ENCODE measurements at regions of chr1 and their contacts with region 1.

Region 1: DNA sequence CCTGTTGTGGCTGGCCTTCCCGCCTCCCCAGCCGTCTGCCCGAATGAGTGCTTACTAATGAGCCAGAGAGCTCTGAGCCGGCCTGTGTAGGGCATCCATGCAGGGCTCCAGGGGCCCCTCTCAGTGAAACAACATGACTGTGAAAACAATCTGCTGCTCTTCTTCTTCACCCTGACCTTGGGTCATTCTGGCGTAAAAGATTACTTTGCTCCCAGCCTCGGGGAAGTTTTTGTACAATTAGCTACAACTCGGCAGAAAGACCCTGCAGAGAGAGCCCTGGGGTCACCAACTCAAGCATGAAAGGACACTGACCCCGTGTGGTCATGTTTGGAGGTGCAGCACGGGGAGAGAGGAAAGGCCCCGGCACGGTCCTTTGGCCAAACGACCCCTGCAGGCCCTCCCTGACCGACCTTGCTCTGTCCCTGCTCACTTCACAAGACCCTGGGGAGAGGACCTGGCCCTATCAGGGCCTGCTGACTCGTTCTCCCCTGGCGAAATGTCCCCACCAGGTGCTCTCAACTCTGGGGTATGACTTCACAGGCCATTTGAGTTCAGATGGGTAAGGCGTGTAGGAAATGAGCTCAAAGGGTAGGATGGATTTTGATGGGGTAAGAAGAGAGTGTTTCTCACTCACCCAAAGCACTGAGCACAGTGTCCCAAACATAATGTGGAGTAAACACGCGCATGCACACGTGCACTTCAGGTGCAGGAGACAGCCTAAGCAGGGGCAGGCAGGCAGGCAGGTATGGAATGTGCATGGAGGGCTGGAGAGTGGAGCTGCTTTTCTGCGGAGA is 22.9 kb upstream of the FAM20B start:
- DNase-seq: peak; percentile 55
- CTCF ChIP-seq: peak; percentile 91

Region 2: GRCh38 chr1:178529364-178530036 is 473.2 kb before region 1 on chr1:
- in situ Hi-C with region 1: loop called (anchors 5 kb)
- DNase-seq: no peak
- CTCF ChIP-seq: no peak

Region 3: GRCh38 chr1:178768423-178768822 is 234.3 kb before region 1 on chr1:
- in situ Hi-C with region 1: loop called (anchors 25 kb)
- DNase-seq: peak; percentile 46
- CTCF ChIP-seq: peak; percentile 83

Region 4: DNA sequence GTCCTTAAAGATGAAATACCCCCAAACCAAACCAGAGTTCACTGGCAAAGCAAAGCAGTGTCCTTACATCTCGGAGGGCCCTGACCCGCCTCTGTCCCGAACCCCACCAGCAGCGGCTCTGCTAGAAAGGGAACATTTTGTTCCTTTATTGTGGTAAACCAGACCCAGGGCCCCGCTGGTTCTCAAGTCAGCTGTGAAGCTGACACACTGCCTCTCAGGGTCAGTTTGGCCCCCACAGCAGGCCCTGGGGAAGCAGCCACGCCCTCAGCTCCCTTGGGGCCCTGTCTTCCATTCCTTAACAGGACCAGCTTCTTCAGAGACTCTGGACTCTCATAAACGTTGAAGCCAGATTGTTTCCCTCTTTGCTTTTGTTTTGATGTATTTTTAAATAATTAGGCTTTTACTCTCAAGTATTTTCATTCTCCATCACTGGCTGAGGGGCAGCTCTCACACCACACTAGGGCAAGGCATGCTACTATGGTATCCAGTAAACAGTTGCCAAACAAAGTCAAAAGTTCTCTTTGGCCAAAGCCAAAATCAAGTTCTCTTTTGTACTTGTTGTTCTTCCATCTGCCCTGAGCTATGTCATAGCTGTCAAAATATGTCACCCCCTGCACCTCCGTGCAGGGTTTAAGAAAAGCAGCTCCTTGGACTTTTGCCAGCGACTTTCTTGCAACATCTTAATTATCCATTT is 70.7 kb before region 1 on chr1:
- in situ Hi-C with region 1: no loop called
- DNase-seq: no peak
- CTCF ChIP-seq: no peak